Panc1 (cell line): ENCODE measurements at regions of chr5 and their contacts with region 1.

Region 1: GRCh38 chr5:174424219-174425053 is 299.9 kb upstream of the MSX2 start:
- DNase-seq: no peak
- ATAC-seq: no peak; the same call in 1 of the 2 replicates
- H3K4me3 ChIP-seq: no peak overlapping the region
- H3K27ac ChIP-seq: no peak overlapping the region
- H3K4me1 ChIP-seq: peaks cover 7% of the 10 kb centered on the region; the same call in 1 of the 2 replicates
- H3K27me3 ChIP-seq: no peaks in the 10 kb centered on the region
- CTCF ChIP-seq: peak; percentile 69

Region 2: DNA sequence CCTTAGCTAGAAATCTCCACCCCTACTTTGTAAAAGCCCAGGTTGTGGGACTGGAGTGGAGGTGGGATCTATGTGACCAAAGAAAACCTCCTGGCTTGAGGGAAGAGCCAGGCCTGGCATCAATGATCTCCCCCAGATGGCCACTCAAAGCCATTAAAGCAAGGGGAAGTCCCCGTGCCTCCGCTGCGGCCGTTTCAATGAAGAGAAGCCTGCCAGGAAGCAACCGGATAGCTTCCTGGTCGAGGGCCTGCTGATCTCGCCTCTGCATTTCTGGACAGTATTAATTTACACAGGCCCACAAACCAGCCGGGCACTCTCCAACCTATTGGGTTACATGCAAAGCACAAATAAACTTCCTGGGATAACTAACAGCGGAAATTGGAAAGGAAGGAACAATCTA is 139.5 kb after region 1 on chr5:
- CTCF ChIA-PET with region 1: no interaction called
- POLR2A ChIA-PET with region 1: no interaction called
- in situ Hi-C with region 1: no loop called
- intact Hi-C with region 1: loop called (anchors 10 kb)
- DNase-seq: no peak
- ATAC-seq: no peak
- H3K4me3 ChIP-seq: no peak overlapping the region
- H3K27ac ChIP-seq: no peak overlapping the region
- H3K4me1 ChIP-seq: no peaks in the 10 kb centered on the region
- H3K27me3 ChIP-seq: peaks cover 2% of the 10 kb centered on the region; the same call in 1 of the 2 replicates
- CTCF ChIP-seq: no peak